Activated B cell treated with CpG ODN at 0.5 μM for 24 hours (primary cell): ENCODE measurements at regions of chr14 and their contacts with region 1.

Region 1: DNA sequence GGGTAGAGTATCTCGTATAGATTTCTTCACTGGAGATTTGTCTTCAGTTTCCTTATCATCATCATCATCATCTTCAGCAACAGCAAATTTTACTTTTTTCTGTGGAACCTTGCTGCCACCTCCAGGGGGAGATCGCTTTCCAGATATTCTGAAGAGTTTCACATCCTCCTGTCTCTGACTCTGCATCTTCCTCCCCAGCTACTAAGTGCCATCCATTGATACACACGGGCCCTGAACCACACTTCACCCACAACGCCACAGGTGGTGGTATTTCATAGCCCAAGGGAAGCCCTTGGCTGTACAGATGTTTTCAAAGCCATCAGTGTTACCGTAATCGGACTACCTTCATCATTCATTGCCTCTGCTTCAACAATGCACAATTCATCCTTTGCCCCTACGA is 82.2 kb downstream of the PPP2R5C start:
- DNase-seq: peak; percentile 48
- ATAC-seq: peak; percentile 79
- H3K4me3 Mint-ChIP-seq: peak overlapping the region; percentile 76
- H3K27ac Mint-ChIP-seq: peak overlapping the region; percentile 94
- H3K4me1 Mint-ChIP-seq: peaks cover 83% of the 10 kb centered on the region
- H3K27me3 Mint-ChIP-seq: no peaks in the 10 kb centered on the region
- CTCF ChIP-seq: peak; percentile 26

Region 2: DNA sequence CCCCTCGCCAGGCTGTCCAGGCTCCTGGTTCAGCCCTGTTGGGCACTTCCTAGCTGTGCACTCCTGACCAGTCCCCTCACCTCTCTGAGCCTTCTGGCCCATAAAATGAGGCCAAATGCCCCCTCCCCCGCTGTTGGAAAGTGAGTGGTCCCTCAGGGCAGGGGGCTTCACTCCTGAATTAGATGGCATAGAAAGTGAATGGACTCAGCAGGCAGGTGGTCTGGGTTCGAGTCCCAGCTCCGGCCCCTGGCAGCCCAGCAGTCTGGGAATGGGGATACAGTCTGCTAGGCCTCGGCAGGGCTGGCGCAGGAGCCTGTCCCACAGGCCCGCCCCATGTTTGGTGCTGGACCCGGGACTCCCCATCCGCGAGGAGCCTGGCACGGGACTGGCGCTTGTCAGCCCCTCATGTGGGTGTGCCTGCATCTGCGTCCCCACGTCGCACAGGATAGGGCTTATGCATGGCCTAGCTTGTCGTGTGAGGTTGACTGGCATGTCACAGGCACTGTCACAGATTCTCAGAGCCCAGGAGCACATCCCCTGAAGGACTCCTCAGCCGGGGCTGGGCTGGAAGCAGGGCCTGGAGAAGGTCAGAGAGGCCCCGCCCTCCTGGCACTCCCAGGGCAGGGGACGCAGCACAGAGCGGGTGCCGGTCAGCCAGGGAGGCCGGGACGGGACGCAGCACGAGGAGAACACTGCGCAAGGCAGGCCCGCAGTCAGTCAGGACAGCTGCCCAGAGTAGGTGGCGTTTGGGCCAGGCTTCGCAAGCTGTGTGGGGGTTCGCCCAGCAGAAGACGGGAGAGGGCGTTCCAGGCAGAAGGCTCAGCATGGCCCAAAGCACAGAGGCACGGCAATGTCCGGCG is 241.8 kb before region 1 on chr14:
- CTCF ChIA-PET with region 1: no interaction called
- POLR2A ChIA-PET with region 1: no interaction called
- intact Hi-C with region 1: no loop called
- DNase-seq: peak; percentile 12
- ATAC-seq: no peak
- H3K4me3 Mint-ChIP-seq: no peak overlapping the region
- H3K27ac Mint-ChIP-seq: no peak overlapping the region
- H3K4me1 Mint-ChIP-seq: peaks cover 18% of the 10 kb centered on the region
- H3K27me3 Mint-ChIP-seq: peaks cover 17% of the 10 kb centered on the region
- CTCF ChIP-seq: no peak

Region 3: DNA sequence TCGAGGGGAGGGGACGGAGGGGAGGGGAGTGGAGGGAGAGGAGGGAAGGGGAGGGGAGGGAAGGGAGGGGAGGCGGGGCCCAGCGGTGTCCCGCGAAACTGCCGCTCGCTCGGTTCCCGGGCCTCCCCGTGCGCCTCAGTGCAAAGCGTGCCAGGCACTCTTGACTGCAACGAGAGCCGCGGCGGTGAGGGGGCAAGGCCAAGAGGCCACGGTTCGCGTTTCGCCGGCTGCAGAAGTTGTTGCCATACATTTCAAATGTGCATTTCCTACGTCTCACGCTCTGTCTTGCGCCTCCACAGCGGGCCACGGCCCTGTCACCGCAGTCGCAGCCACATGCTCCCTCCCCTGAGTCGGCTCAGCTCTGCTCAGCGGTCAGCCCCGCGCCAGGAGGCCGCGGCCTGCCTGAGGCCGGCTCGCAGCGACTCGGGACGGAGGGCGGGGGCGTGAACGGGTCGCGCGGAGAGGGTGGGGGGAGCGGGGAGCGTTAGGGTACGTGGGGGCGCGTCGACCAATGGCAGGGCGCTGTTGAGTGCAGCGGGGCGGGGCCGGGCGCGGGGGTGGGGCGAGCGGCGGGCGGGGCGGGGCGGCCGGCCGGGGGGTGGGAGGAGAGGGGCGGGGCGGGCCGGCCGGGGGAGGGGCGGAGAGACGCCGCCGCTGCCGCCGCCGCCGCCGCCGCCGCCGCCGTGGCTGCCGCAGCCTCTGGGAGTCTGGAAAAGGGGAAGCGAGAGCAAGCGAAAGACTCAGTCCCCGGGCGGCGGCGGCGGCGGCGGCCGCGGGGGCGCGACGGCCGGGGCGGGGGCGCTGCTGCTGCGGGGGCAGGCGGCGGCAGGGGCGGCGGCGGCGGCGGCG is 82.4 kb before region 1 on chr14 and contains the start of gene PPP2R5C:
- CTCF ChIA-PET with region 1: no interaction called
- POLR2A ChIA-PET with region 1: interaction called, 12 read pairs
- intact Hi-C with region 1: no loop called
- DNase-seq: peak; percentile 81
- ATAC-seq: peak; percentile 63
- H3K4me3 Mint-ChIP-seq: peak within 1 kb of the TSS; percentile 88
- H3K27ac Mint-ChIP-seq: peak within 1 kb of the TSS; percentile 77
- H3K4me1 Mint-ChIP-seq: peaks cover 18% of the 10 kb centered on the region
- H3K27me3 Mint-ChIP-seq: no peaks in the 10 kb centered on the region
- CTCF ChIP-seq: no peak
- total RNA-seq, gene PPP2R5C: 197 and 227 TPM in 2 replicates

Region 4: DNA sequence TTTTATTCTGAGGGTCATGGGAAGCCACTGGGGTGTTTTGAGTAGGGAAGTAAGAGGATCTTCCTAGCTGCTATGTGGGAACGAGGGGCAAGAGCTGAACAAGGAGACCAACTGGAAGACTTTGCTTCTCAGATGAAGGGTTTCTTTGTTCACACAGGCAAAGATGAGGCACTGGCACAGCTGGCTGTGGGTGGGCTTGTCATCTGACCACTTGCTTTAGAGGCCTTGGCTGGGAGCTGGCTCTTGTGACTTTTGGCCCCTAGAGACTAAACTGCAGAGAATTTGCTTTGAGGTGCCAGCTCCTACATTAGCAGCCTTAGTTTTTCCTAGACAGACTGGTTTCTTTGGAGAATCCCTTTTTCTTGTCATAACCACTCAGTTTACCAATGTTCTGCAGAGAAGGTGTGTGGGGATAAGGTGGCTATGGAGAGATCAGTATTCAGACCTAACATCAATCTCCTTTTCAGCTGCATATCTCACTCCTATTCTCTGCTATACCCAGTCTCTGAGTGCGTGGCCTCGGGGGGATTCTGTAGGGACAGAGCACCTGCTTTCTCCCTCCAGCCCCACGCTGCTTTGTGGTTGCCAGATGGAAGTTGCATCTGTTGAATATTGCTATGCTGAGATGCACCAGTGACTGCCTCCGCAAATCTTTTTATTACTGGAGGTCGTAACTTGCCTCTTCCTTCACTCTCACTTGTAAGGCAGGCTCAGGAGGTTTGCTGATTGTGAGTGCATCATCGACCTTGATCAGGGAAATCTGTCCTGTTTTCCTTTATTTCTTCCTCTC is 69.5 kb before region 1 on chr14:
- CTCF ChIA-PET with region 1: interaction called, 80 read pairs
- POLR2A ChIA-PET with region 1: interaction called, 27 read pairs
- intact Hi-C with region 1: loop called (anchors 1 kb)
- DNase-seq: peak; percentile 42
- ATAC-seq: peak; percentile 79
- H3K4me3 Mint-ChIP-seq: peak overlapping the region; percentile 49
- H3K27ac Mint-ChIP-seq: peak overlapping the region; percentile 81
- H3K4me1 Mint-ChIP-seq: peaks cover 58% of the 10 kb centered on the region
- H3K27me3 Mint-ChIP-seq: no peaks in the 10 kb centered on the region
- CTCF ChIP-seq: no peak

Region 5: GRCh38 chr14:101876555-101876938 is 32.9 kb after region 1 on chr14:
- CTCF ChIA-PET with region 1: interaction called, 8 read pairs
- POLR2A ChIA-PET with region 1: interaction called, 27 read pairs
- intact Hi-C with region 1: loop called (anchors 1 kb)
- DNase-seq: peak; percentile 60
- ATAC-seq: peak; percentile 84
- H3K4me3 Mint-ChIP-seq: peak overlapping the region; percentile 72
- H3K27ac Mint-ChIP-seq: peak overlapping the region; percentile 96
- H3K4me1 Mint-ChIP-seq: peaks cover 84% of the 10 kb centered on the region
- H3K27me3 Mint-ChIP-seq: no peaks in the 10 kb centered on the region
- CTCF ChIP-seq: no peak

Region 6: GRCh38 chr14:101947906-101948665 is 104.4 kb after region 1 on chr14:
- CTCF ChIA-PET with region 1: interaction called, 5 read pairs
- POLR2A ChIA-PET with region 1: interaction called, 22 read pairs
- intact Hi-C with region 1: loop called (anchors 1 kb)
- DNase-seq: peak; percentile 98
- ATAC-seq: peak; percentile 95
- H3K4me3 Mint-ChIP-seq: peak overlapping the region; percentile 93
- H3K27ac Mint-ChIP-seq: peak overlapping the region; percentile 97
- H3K4me1 Mint-ChIP-seq: peaks cover 19% of the 10 kb centered on the region
- H3K27me3 Mint-ChIP-seq: peaks cover 22% of the 10 kb centered on the region
- CTCF ChIP-seq: no peak

Region 7: GRCh38 chr14:101982621-101983020 is 139.0 kb after region 1 on chr14:
- CTCF ChIA-PET with region 1: no interaction called
- POLR2A ChIA-PET with region 1: no interaction called
- intact Hi-C with region 1: no loop called
- DNase-seq: no peak
- ATAC-seq: no peak
- H3K4me3 Mint-ChIP-seq: no peak overlapping the region
- H3K27ac Mint-ChIP-seq: no peak overlapping the region
- H3K4me1 Mint-ChIP-seq: peaks cover 8% of the 10 kb centered on the region
- H3K27me3 Mint-ChIP-seq: no peaks in the 10 kb centered on the region
- CTCF ChIP-seq: no peak